Psoas muscle (tissue), 8 donors: ENCODE measurements at regions of chr13 and their contacts with region 1.

Region 1: GRCh38 chr13:45807520-45808099 is 43.9 kb downstream of the SIAH3 start:
- DNase-seq: no peak
- ATAC-seq: peak; percentile 74 to 90 (median 80)
- H3K4me3 ChIP-seq: no peak overlapping the region
- H3K27ac ChIP-seq: no peak overlapping the region
- H3K4me1 ChIP-seq: no peaks in the 10 kb centered on the region
- H3K27me3 ChIP-seq: no peaks in the 10 kb centered on the region
- CTCF ChIP-seq: peak; percentile 66

Region 2: GRCh38 chr13:45674908-45675307 is 132.7 kb before region 1 on chr13:
- intact Hi-C with region 1: no loop called
- DNase-seq: no peak
- ATAC-seq: no peak
- H3K4me3 ChIP-seq: no peak overlapping the region
- H3K27ac ChIP-seq: no peak overlapping the region
- H3K4me1 ChIP-seq: no peaks in the 10 kb centered on the region
- H3K27me3 ChIP-seq: no peaks in the 10 kb centered on the region
- CTCF ChIP-seq: no peak

Region 3: GRCh38 chr13:46010148-46010547 is 202.5 kb after region 1 on chr13:
- intact Hi-C with region 1: loop called in 1 of 2 experiments (anchors 10 kb)
- DNase-seq: no peak
- ATAC-seq: no peak
- H3K4me3 ChIP-seq: no peak overlapping the region
- H3K27ac ChIP-seq: no peak overlapping the region
- H3K4me1 ChIP-seq: no peaks in the 10 kb centered on the region
- H3K27me3 ChIP-seq: no peaks in the 10 kb centered on the region
- CTCF ChIP-seq: peak; percentile 10

Region 4: GRCh38 chr13:46126552-46127357 is 319.1 kb after region 1 on chr13:
- intact Hi-C with region 1: loop called in 1 of 2 experiments (anchors 2 kb)
- DNase-seq: peak; percentile 41 to 63
- ATAC-seq: peak; percentile 68 to 80 (median 76)
- H3K4me3 ChIP-seq: no peak overlapping the region
- H3K27ac ChIP-seq: no peak overlapping the region
- H3K4me1 ChIP-seq: no peaks in the 10 kb centered on the region
- H3K27me3 ChIP-seq: no peaks in the 10 kb centered on the region
- CTCF ChIP-seq: peak; percentile 61

Region 5: DNA sequence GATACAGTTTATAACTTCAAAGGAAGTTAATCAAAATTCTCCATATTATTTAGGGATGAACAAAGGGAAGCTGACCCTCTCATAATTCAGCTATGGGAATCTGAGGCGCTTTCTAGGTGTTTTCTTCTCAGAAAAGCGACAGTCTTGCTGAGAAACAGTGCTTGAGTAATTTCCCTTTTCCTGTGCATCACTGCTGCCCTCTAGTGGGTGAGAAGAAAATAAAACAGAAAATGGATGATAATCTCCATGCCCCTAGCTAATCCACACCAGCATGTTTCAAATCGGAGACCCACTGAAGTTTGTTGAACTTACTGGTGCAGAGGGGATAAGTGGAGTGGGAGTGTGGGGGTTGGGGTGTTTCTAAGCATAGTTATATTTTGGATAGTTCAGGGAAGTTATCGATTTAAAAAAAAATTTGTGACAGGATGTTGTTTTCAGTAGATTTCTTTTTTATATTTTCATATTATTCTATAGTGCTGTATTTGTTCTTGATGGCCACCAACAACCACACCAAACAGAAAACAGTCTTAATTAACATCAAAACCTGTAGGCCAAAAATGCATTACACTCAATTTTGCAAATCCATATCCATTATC is 353.0 kb after region 1 on chr13:
- intact Hi-C with region 1: loop called (anchors 5 to 10 kb)
- DNase-seq: no peak
- ATAC-seq: peak in 1 of 4 donors; percentile 50
- H3K4me3 ChIP-seq: no peak overlapping the region
- H3K27ac ChIP-seq: no peak overlapping the region
- H3K4me1 ChIP-seq: no peaks in the 10 kb centered on the region
- H3K27me3 ChIP-seq: no peaks in the 10 kb centered on the region
- CTCF ChIP-seq: peak; percentile 75

Region 6: GRCh38 chr13:46184277-46184699 is 376.7 kb after region 1 on chr13:
- intact Hi-C with region 1: no loop called
- DNase-seq: peak in 1 of 2 donors; percentile 19
- ATAC-seq: no peak
- H3K4me3 ChIP-seq: no peak overlapping the region
- H3K27ac ChIP-seq: no peak overlapping the region
- H3K4me1 ChIP-seq: no peaks in the 10 kb centered on the region
- H3K27me3 ChIP-seq: peaks cover 0 to 5% (median 0%) of the 10 kb centered on the region in 3 donors
- CTCF ChIP-seq: peak; percentile 15